ENCODE measurements at regions of chr12 and their contacts with region 1.

Region 1: GRCh38 chr12:48542300-48542928 is 17.0 kb downstream of the OR8S1 start:
- DNase-seq: peak; percentile 63
- ATAC-seq: peak; percentile 67
- H3K4me3 Mint-ChIP-seq: no peak overlapping the region
- H3K27ac Mint-ChIP-seq: no peak overlapping the region
- H3K4me1 Mint-ChIP-seq: peaks cover 2% of the 10 kb centered on the region
- H3K27me3 Mint-ChIP-seq: peaks cover 2% of the 10 kb centered on the region

Region 2: GRCh38 chr12:48527891-48528675 is 14.3 kb before region 1 on chr12:
- CTCF ChIA-PET with region 1: interaction called, 17 read pairs
- POLR2A ChIA-PET with region 1: no interaction called
- DNase-seq: no peak
- ATAC-seq: no peak
- H3K4me3 Mint-ChIP-seq: no peak overlapping the region
- H3K27ac Mint-ChIP-seq: no peak overlapping the region
- H3K4me1 Mint-ChIP-seq: peaks cover 10% of the 10 kb centered on the region
- H3K27me3 Mint-ChIP-seq: no peaks in the 10 kb centered on the region

Region 3: GRCh38 chr12:48618541-48618940 is 76.1 kb after region 1 on chr12:
- CTCF ChIA-PET with region 1: interaction called, 150 read pairs
- POLR2A ChIA-PET with region 1: no interaction called
- DNase-seq: peak; percentile 87
- ATAC-seq: peak; percentile 92
- H3K4me3 Mint-ChIP-seq: no peak overlapping the region
- H3K27ac Mint-ChIP-seq: no peak overlapping the region
- H3K4me1 Mint-ChIP-seq: no peaks in the 10 kb centered on the region
- H3K27me3 Mint-ChIP-seq: peaks cover 23% of the 10 kb centered on the region

Measured in activated CD8-positive, alpha-beta T cell treated with anti-CD3 and anti-CD28 coated beads, Interleukin-2, amount 10 ng/mL, durations not matched to agents 7 days and 5 days (primary cell).